ENCODE measurements at regions of chr10 and their contacts with region 1.

Region 1: GRCh38 chr10:79286318-79286951 is 60.8 kb upstream of the PPIF start:
- DNase-seq: peak; percentile 93
- ATAC-seq: peak; percentile 92
- H3K4me3 ChIP-seq: peak overlapping the region in 4 of 5 experiments; percentile 1 to 40 (median 23)
- H3K4me3 Mint-ChIP-seq: peak overlapping the region; percentile 84
- H3K27ac ChIP-seq: peak overlapping the region; percentile 80 to 88
- H3K27ac Mint-ChIP-seq: peak overlapping the region; percentile 97
- H3K4me1 ChIP-seq: peaks cover 52 to 66% of the 10 kb centered on the region in 2 donors
- H3K4me1 Mint-ChIP-seq: peaks cover 79% of the 10 kb centered on the region
- H3K27me3 ChIP-seq: no peaks in the 10 kb centered on the region
- H3K27me3 Mint-ChIP-seq: no peaks in the 10 kb centered on the region
- CTCF ChIP-seq: no peak

Region 2: DNA sequence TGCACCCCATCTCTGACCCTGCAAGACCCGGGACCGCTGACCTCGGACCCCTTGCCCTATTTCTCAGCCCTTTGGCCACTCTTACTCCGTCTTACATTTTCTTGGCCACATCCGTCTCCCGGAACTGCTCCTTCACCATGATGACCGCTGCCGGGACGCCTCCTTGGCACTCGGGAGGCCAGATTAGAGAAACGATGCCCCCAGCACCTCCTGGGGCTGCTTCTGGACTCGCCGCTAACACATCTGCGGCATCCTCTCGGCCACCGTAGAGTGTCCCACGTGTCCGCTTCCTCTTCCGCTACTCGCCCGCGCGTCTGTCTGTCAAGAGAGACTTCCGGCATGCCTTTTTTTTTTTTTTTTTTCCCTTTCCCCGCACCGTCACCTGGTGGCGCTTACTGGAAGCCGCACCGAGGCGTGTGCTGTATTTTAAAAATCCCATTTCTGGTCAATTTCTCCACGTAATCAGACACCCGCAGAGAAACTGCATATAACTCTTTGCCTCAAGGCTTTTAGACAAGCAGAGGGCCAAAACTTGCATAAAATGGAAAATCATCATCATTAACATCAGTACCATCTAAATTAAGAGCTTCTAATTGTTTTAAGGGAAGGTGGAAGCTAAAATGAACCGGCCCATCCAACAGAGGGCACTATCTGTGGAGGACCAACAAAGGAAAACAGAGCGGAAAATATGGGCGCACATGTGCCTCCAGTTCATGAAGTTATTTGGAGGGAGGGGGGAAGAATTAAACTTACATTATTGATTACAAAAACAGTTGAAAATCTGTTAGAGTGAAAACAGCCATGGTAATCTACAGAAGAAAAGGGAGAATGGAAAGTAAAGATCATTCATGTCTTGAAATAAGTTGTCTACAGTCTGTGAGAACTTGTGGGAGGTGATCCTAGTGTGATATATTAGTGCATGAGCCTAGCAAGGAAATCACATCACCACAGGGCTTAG is 1256.9 kb before region 1 on chr10 and contains the start of gene POLR3A:
- CTCF ChIA-PET with region 1: no interaction called
- POLR2A ChIA-PET with region 1: no interaction called
- intact Hi-C with region 1: loop called (anchors 1 kb)
- DNase-seq: peak; percentile 96
- ATAC-seq: peak; percentile 60
- H3K4me3 ChIP-seq: peak within 1 kb of the TSS; percentile 78 to 100 (median 96)
- H3K4me3 Mint-ChIP-seq: peak within 1 kb of the TSS; percentile 99
- H3K27ac ChIP-seq: peak within 1 kb of the TSS; percentile 43 to 81
- H3K27ac Mint-ChIP-seq: peak within 1 kb of the TSS; percentile 89
- H3K4me1 ChIP-seq: peaks cover 18 to 28% of the 10 kb centered on the region in 2 donors
- H3K4me1 Mint-ChIP-seq: peaks cover 37% of the 10 kb centered on the region
- H3K27me3 ChIP-seq: no peaks in the 10 kb centered on the region
- H3K27me3 Mint-ChIP-seq: no peaks in the 10 kb centered on the region
- CTCF ChIP-seq: peak; percentile 64
- total RNA-seq, gene POLR3A: 18.3 and 18.4 TPM in 2 replicates

Region 3: GRCh38 chr10:79019911-79020491 is 266.4 kb before region 1 on chr10:
- CTCF ChIA-PET with region 1: no interaction called
- POLR2A ChIA-PET with region 1: no interaction called
- intact Hi-C with region 1: no loop called
- DNase-seq: no peak
- ATAC-seq: no peak
- H3K4me3 ChIP-seq: no peak overlapping the region
- H3K4me3 Mint-ChIP-seq: no peak overlapping the region
- H3K27ac ChIP-seq: no peak overlapping the region
- H3K27ac Mint-ChIP-seq: no peak overlapping the region
- H3K4me1 ChIP-seq: peaks cover 0 to 7% of the 10 kb centered on the region in 2 donors
- H3K4me1 Mint-ChIP-seq: peaks cover 6% of the 10 kb centered on the region
- H3K27me3 ChIP-seq: peaks cover 0 to 5% (median 0%) of the 10 kb centered on the region in 4 experiments
- H3K27me3 Mint-ChIP-seq: peaks cover 7% of the 10 kb centered on the region
- CTCF ChIP-seq: no peak

Region 4: GRCh38 chr10:79266543-79267312 is 19.7 kb before region 1 on chr10:
- CTCF ChIA-PET with region 1: interaction called, 3 read pairs
- POLR2A ChIA-PET with region 1: interaction called, 6 read pairs
- intact Hi-C with region 1: loop called (anchors 1 kb)
- DNase-seq: no peak
- ATAC-seq: peak; percentile 61
- H3K4me3 ChIP-seq: peak overlapping the region in 3 of 5 experiments; percentile 8 to 45 (median 15)
- H3K4me3 Mint-ChIP-seq: peak overlapping the region; percentile 76
- H3K27ac ChIP-seq: peak overlapping the region; percentile 64 to 71
- H3K27ac Mint-ChIP-seq: peak overlapping the region; percentile 91
- H3K4me1 ChIP-seq: peaks cover 62 to 95% of the 10 kb centered on the region in 2 donors
- H3K4me1 Mint-ChIP-seq: peaks cover 95% of the 10 kb centered on the region
- H3K27me3 ChIP-seq: no peaks in the 10 kb centered on the region
- H3K27me3 Mint-ChIP-seq: no peaks in the 10 kb centered on the region
- CTCF ChIP-seq: no peak

Region 5: GRCh38 chr10:79331709-79332108 is 45.3 kb after region 1 on chr10:
- CTCF ChIA-PET with region 1: interaction called, 3 read pairs
- POLR2A ChIA-PET with region 1: no interaction called
- intact Hi-C with region 1: loop called (anchors 1 kb)
- DNase-seq: peak; percentile 87
- ATAC-seq: peak; percentile 93
- H3K4me3 ChIP-seq: no peak overlapping the region
- H3K4me3 Mint-ChIP-seq: peak overlapping the region; percentile 57
- H3K27ac ChIP-seq: no peak overlapping the region
- H3K27ac Mint-ChIP-seq: peak overlapping the region; percentile 71
- H3K4me1 ChIP-seq: peaks cover 8 to 13% of the 10 kb centered on the region in 2 donors
- H3K4me1 Mint-ChIP-seq: peaks cover 20% of the 10 kb centered on the region
- H3K27me3 ChIP-seq: no peaks in the 10 kb centered on the region
- H3K27me3 Mint-ChIP-seq: no peaks in the 10 kb centered on the region
- CTCF ChIP-seq: no peak

Region 6: GRCh38 chr10:79445141-79445976 is 158.9 kb after region 1 on chr10 and contains the start of gene ZCCHC24:
- CTCF ChIA-PET with region 1: interaction called, 3 read pairs
- POLR2A ChIA-PET with region 1: interaction called, 4 read pairs
- intact Hi-C with region 1: loop called (anchors 10 kb)
- DNase-seq: peak; percentile 97
- ATAC-seq: peak; percentile 91
- H3K4me3 ChIP-seq: peak within 1 kb of the TSS; percentile 44 to 73 (median 65)
- H3K4me3 Mint-ChIP-seq: peak within 1 kb of the TSS; percentile 94
- H3K27ac ChIP-seq: no peak within 1 kb of the TSS
- H3K27ac Mint-ChIP-seq: peak within 1 kb of the TSS; percentile 86
- H3K4me1 ChIP-seq: peaks cover 18 to 29% of the 10 kb centered on the region in 2 donors
- H3K4me1 Mint-ChIP-seq: peaks cover 26% of the 10 kb centered on the region
- H3K27me3 ChIP-seq: peaks cover 0 to 12% (median 5%) of the 10 kb centered on the region in 4 experiments
- H3K27me3 Mint-ChIP-seq: no peaks in the 10 kb centered on the region
- CTCF ChIP-seq: no peak
- total RNA-seq, gene ZCCHC24: 2.1 and 2.3 TPM in 2 replicates